Dendritic cell treated with granulocyte-macrophage colony-stimulating factor and Interleukin-4, amounts not matched to agents 40 ng/mL and 50 ng/mL, for 4 days (primary cell): ENCODE measurements at regions of chr7 and their contacts with region 1.

Region 1: GRCh38 chr7:25894902-25895791 is 256.9 kb upstream of the NFE2L3 start:
- H3K4me3 Mint-ChIP-seq: peak overlapping the region; percentile 55
- H3K27ac Mint-ChIP-seq: peak overlapping the region; percentile 49
- H3K4me1 Mint-ChIP-seq: peaks cover 43% of the 10 kb centered on the region
- H3K27me3 Mint-ChIP-seq: peaks cover 72% of the 10 kb centered on the region

Region 2: GRCh38 chr7:25820432-25821040 is 74.6 kb before region 1 on chr7:
- intact Hi-C with region 1: no loop called
- H3K4me3 Mint-ChIP-seq: no peak overlapping the region
- H3K27ac Mint-ChIP-seq: no peak overlapping the region
- H3K4me1 Mint-ChIP-seq: no peaks in the 10 kb centered on the region
- H3K27me3 Mint-ChIP-seq: peaks cover 15% of the 10 kb centered on the region

Region 3: GRCh38 chr7:26200444-26201246 is 305.5 kb after region 1 on chr7 and contains the start of gene HNRNPA2B1:
- intact Hi-C with region 1: loop called (anchors 5 kb)
- H3K4me3 Mint-ChIP-seq: peak within 1 kb of the TSS; percentile 99
- H3K27ac Mint-ChIP-seq: peak within 1 kb of the TSS; percentile 100
- H3K4me1 Mint-ChIP-seq: peaks cover 42% of the 10 kb centered on the region
- H3K27me3 Mint-ChIP-seq: no peaks in the 10 kb centered on the region

Region 4: GRCh38 chr7:26365077-26365900 is 470.1 kb after region 1 on chr7:
- intact Hi-C with region 1: loop called (anchors 2 kb)
- H3K4me3 Mint-ChIP-seq: no peak overlapping the region
- H3K27ac Mint-ChIP-seq: no peak overlapping the region
- H3K4me1 Mint-ChIP-seq: peaks cover 12% of the 10 kb centered on the region
- H3K27me3 Mint-ChIP-seq: no peaks in the 10 kb centered on the region

Region 5: GRCh38 chr7:26667500-26668133 is 772.5 kb after region 1 on chr7:
- intact Hi-C with region 1: loop called (anchors 10 kb)
- H3K4me3 Mint-ChIP-seq: no peak overlapping the region
- H3K27ac Mint-ChIP-seq: no peak overlapping the region
- H3K4me1 Mint-ChIP-seq: peaks cover 6% of the 10 kb centered on the region
- H3K27me3 Mint-ChIP-seq: no peaks in the 10 kb centered on the region

Region 6: GRCh38 chr7:27160546-27161213 is 1265.5 kb after region 1 on chr7:
- intact Hi-C with region 1: loop called (anchors 10 kb)
- H3K4me3 Mint-ChIP-seq: peak overlapping the region; percentile 92
- H3K27ac Mint-ChIP-seq: peak overlapping the region; percentile 80
- H3K4me1 Mint-ChIP-seq: peaks cover 60% of the 10 kb centered on the region
- H3K27me3 Mint-ChIP-seq: peaks cover 87% of the 10 kb centered on the region